Heart left ventricle (tissue), 16 donors: ENCODE measurements at regions of chr11 and their contacts with region 1.

Region 1: GRCh38 chr11:8033305-8034105 is 46.4 kb downstream of the EIF3F start:
- DNase-seq: peak; percentile 81 to 89 (median 84)
- ATAC-seq: peak; percentile 27 to 70 (median 61)
- H3K4me3 ChIP-seq: no peak overlapping the region
- H3K27ac ChIP-seq: peak overlapping the region in 1 of 12 donors; percentile 75
- H3K4me1 ChIP-seq: peaks cover 0 to 43% (median 14%) of the 10 kb centered on the region in 12 donors
- H3K27me3 ChIP-seq: peaks cover 0 to 3% (median 0%) of the 10 kb centered on the region in 9 donors
- CTCF ChIP-seq: peak; percentile 74 to 94 (median 90)
- POLR2A ChIP-seq: no peak

Region 2: GRCh38 chr11:8070417-8071115 is 37.1 kb after region 1 on chr11:
- intact Hi-C with region 1: loop called (anchors 1 to 5 kb)
- DNase-seq: no peak
- ATAC-seq: peak in 3 of 4 donors; percentile 31 to 38 (median 35)
- H3K4me3 ChIP-seq: no peak overlapping the region
- H3K27ac ChIP-seq: no peak overlapping the region
- H3K4me1 ChIP-seq: peaks cover 6 to 48% (median 40%) of the 10 kb centered on the region in 12 donors
- H3K27me3 ChIP-seq: no peaks in the 10 kb centered on the region
- CTCF ChIP-seq: peak; percentile 19 to 60 (median 46)
- POLR2A ChIP-seq: no peak

Region 3: DNA sequence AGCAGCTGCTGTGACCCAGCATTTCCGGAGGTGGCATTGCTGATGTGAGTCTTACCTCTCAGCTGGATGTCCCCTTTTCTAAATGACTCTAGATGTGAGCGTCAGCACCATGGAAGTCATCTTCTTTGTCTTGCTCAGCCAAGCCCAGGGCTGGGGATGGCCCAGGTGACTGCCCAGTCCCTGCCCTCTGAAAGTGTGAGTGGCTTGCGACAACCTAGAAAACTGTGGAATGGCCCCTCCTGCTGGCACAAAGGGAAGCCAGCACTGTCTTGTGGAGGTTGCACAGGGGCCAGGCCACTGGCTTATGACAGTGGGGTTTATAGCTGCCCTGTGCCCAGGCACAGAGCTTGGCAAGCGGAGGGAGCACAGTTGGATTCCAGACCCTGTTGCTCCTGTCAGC is 53.7 kb after region 1 on chr11:
- intact Hi-C with region 1: loop called in 8 of 10 experiments (anchors 2 to 10 kb)
- DNase-seq: peak in 1 of 5 donors; percentile 22
- ATAC-seq: no peak
- H3K4me3 ChIP-seq: no peak overlapping the region
- H3K27ac ChIP-seq: no peak overlapping the region
- H3K4me1 ChIP-seq: peaks cover 0 to 57% (median 34%) of the 10 kb centered on the region in 12 donors
- H3K27me3 ChIP-seq: no peaks in the 10 kb centered on the region
- CTCF ChIP-seq: peak in 4 of 12 donors; percentile 14 to 32 (median 24)
- POLR2A ChIP-seq: no peak

Region 4: GRCh38 chr11:8092587-8093424 is 59.3 kb after region 1 on chr11:
- intact Hi-C with region 1: loop called in 9 of 10 experiments (anchors 2 to 10 kb)
- DNase-seq: peak in 4 of 5 donors; percentile 50 to 79 (median 71)
- ATAC-seq: peak; percentile 39 to 75 (median 66)
- H3K4me3 ChIP-seq: no peak overlapping the region
- H3K27ac ChIP-seq: peak overlapping the region in 2 of 12 donors; percentile 24 to 33
- H3K4me1 ChIP-seq: peaks cover 0 to 15% (median 5%) of the 10 kb centered on the region in 12 donors
- H3K27me3 ChIP-seq: no peaks in the 10 kb centered on the region
- CTCF ChIP-seq: peak; percentile 51 to 74 (median 62)
- POLR2A ChIP-seq: no peak

Region 5: GRCh38 chr11:8099291-8099899 is 65.9 kb after region 1 on chr11:
- intact Hi-C with region 1: loop called in 5 of 10 experiments (anchors 1 to 10 kb)
- DNase-seq: peak in 4 of 5 donors; percentile 59 to 73 (median 70)
- ATAC-seq: peak; percentile 47 to 70 (median 56)
- H3K4me3 ChIP-seq: no peak overlapping the region
- H3K27ac ChIP-seq: no peak overlapping the region
- H3K4me1 ChIP-seq: no peaks in the 10 kb centered on the region
- H3K27me3 ChIP-seq: no peaks in the 10 kb centered on the region
- CTCF ChIP-seq: peak; percentile 52 to 89 (median 80)
- POLR2A ChIP-seq: no peak

Region 6: DNA sequence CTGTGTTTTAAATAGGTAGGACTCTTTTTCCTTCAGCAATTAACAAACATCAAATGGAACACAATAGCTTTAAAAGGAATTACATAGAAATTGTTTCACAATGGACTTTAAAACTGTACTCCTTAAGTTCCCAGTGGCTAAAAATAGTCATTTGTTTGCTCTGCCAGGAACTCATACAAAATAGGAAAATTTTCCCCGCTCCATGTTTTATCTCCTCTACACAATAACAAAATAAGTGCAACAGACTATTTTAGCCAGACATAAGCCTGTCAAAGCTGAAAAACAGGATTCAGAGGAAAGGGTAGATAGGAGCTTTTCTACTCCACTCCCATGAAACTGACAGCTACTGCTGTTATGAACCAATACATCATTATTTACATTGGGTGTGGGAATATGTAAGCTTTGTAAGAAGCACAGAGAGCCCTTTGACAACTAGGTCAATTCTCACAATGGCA is 470.4 kb after region 1 on chr11:
- intact Hi-C with region 1: no loop called
- DNase-seq: no peak
- ATAC-seq: peak in 2 of 4 donors; percentile 24 to 36
- H3K4me3 ChIP-seq: no peak overlapping the region
- H3K27ac ChIP-seq: peak overlapping the region in 3 of 12 donors; percentile 18 to 39 (median 19)
- H3K4me1 ChIP-seq: peaks cover 0 to 12% (median 3%) of the 10 kb centered on the region in 12 donors
- H3K27me3 ChIP-seq: no peaks in the 10 kb centered on the region
- CTCF ChIP-seq: no peak
- POLR2A ChIP-seq: no peak